Psoas muscle (tissue), 8 donors: ENCODE measurements at regions of chr3 and their contacts with region 1.

Region 1: DNA sequence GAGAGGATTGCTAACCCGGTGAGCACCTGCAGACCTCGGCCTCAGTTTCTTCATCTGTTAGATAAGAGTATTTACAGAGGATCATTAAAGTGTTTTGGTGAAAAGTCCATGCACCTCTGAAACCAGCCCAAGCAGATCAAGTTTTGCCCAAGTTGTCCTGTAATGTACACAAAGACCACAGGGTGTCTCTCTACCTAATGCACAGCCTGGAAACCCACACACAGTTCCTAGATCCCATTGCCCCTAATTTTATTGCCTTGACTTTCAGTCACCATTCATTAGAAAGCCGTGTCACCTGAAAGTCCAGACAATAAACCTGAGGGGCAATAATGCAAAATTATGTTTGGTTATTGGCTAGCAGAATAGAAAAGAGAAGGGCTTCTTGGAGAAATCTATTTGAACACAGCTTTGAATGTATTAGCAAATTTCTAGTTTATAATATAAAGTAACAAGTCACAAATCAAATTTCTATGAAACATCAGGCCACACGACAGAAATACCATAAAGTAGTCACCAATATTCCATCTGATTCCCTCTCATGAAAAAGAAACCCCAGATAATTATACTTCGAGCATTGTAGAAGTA is 161.3 kb upstream of the SLC2A2 start:
- DNase-seq: no peak
- ATAC-seq: peak; percentile 55 to 86 (median 70)
- H3K4me3 ChIP-seq: no peak overlapping the region
- H3K27ac ChIP-seq: no peak overlapping the region
- H3K4me1 ChIP-seq: peaks cover 34% of the 10 kb centered on the region
- H3K27me3 ChIP-seq: no peaks in the 10 kb centered on the region
- CTCF ChIP-seq: peak; percentile 56

Region 2: DNA sequence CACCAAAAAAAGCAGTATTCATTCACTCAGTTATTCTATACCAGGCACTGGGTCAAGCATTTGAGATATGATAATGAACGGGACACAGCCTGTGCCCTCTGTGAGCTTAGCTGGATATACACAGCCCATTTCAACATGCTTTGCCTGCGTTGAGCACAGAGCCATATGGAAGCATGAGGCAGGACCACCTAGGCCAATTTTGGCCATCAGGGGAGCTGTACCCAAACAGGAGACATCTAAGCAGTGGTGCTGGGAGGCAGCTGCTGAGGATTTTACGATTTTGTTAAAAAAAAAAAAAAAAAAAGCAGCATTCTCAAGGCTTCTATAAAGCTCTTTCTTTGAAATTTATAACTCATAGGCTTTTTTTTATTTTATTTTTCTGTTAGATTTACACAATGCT is 74.1 kb before region 1 on chr3:
- intact Hi-C with region 1: no loop called
- DNase-seq: no peak
- ATAC-seq: no peak
- H3K4me3 ChIP-seq: no peak overlapping the region
- H3K27ac ChIP-seq: no peak overlapping the region
- H3K4me1 ChIP-seq: no peaks in the 10 kb centered on the region
- H3K27me3 ChIP-seq: no peaks in the 10 kb centered on the region
- CTCF ChIP-seq: no peak

Region 3: DNA sequence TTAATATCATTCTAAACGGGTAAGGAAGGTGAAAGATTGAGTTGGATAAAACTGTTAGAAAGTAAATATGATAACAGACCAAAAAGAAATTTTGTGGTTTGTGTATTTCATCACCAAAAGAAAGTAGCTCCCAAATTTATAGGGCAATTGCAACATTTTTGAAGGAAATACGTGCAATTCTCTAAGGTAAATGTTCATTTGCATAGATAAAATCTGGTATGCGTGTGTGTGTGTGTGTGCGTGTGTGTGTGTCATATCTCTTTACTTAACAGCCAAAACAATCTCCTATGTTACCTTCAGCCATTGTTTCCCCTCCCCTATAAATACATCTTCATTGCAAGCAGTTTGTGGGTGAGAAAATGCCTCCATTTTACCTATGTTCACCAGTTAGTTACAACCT is 64.0 kb after region 1 on chr3:
- intact Hi-C with region 1: loop called in 1 of 2 experiments (anchors 5 kb)
- DNase-seq: no peak
- ATAC-seq: no peak
- H3K4me3 ChIP-seq: no peak overlapping the region
- H3K27ac ChIP-seq: no peak overlapping the region
- H3K4me1 ChIP-seq: peaks cover 14% of the 10 kb centered on the region
- H3K27me3 ChIP-seq: no peaks in the 10 kb centered on the region
- CTCF ChIP-seq: no peak

Region 4: GRCh38 chr3:171309906-171310359 is 122.1 kb after region 1 on chr3:
- intact Hi-C with region 1: loop called in 1 of 2 experiments (anchors 10 kb)
- DNase-seq: no peak
- ATAC-seq: peak in 2 of 4 donors; percentile 57 to 76
- H3K4me3 ChIP-seq: no peak overlapping the region
- H3K27ac ChIP-seq: no peak overlapping the region
- H3K4me1 ChIP-seq: peaks cover 26% of the 10 kb centered on the region
- H3K27me3 ChIP-seq: no peaks in the 10 kb centered on the region
- CTCF ChIP-seq: no peak

Region 5: GRCh38 chr3:171334465-171334811 is 146.6 kb after region 1 on chr3:
- intact Hi-C with region 1: loop called in 1 of 2 experiments (anchors 10 kb)
- DNase-seq: peak; percentile 57 to 84
- ATAC-seq: peak; percentile 92 to 97 (median 95)
- H3K4me3 ChIP-seq: no peak overlapping the region
- H3K27ac ChIP-seq: peak overlapping the region; percentile 84
- H3K4me1 ChIP-seq: peaks cover 46% of the 10 kb centered on the region
- H3K27me3 ChIP-seq: no peaks in the 10 kb centered on the region
- CTCF ChIP-seq: no peak

Region 6: DNA sequence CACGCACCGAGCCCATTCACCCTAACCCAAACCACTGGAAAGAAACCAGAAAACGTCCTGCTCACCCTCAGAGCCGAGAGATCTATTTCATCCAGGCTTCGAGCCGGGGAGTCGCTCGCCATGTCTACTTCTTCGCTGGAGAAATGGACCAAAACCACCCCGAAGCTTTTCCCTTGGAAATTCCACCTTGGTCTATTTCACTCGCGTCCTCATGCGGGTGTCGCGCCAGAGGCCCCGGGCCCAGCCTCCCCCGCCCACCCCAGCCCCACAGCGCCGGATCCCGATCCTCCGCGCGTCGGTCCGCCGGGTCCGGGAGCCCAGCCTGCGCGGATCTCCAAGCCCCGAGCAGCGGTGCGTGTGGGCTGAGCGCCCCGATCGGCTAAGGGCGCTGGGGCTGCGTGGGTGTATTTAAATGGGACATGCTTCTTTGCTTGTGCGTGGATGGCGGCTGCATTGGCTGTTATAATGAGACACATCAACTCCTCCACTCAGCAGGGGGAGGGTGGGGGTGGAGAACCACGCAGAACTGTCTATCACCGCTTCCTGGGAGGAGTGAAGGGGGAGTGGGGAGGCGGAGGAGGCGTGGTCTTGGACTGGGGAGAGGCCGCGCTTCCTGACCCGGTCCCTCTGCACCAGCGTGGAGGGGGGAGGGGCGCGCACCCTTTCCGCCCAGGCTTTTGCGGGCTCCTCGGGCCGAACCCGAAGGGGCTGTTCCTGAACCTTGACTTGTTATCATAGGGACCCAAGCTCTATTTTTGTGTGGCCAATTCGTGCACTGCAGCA is 272.3 kb after region 1 on chr3 and contains the start of gene TNIK:
- intact Hi-C with region 1: loop called (anchors 5 kb)
- DNase-seq: peak; percentile 89 to 94
- ATAC-seq: peak; percentile 92 to 96 (median 93)
- H3K4me3 ChIP-seq: peak within 1 kb of the TSS; percentile 79
- H3K27ac ChIP-seq: peak within 1 kb of the TSS; percentile 87
- H3K4me1 ChIP-seq: peaks cover 21% of the 10 kb centered on the region
- H3K27me3 ChIP-seq: no peaks in the 10 kb centered on the region
- CTCF ChIP-seq: peak; percentile 29
- total RNA-seq, gene TNIK: 12.5 to 32.4 (median 24.8) TPM

Region 7: GRCh38 chr3:171566803-171567422 is 379.1 kb after region 1 on chr3:
- intact Hi-C with region 1: loop called (anchors 5 kb)
- DNase-seq: no peak
- ATAC-seq: peak; percentile 48 to 85 (median 68)
- H3K4me3 ChIP-seq: no peak overlapping the region
- H3K27ac ChIP-seq: no peak overlapping the region
- H3K4me1 ChIP-seq: peaks cover 4% of the 10 kb centered on the region
- H3K27me3 ChIP-seq: no peaks in the 10 kb centered on the region
- CTCF ChIP-seq: peak; percentile 85